Calu3 (cell line): ENCODE measurements at regions of chr6 and their contacts with region 1.

Region 1: GRCh38 chr6:138765896-138766655 is 7.5 kb upstream of the CCDC28A start:
- DNase-seq: no peak
- H3K4me3 Mint-ChIP-seq: no peak overlapping the region
- H3K27ac Mint-ChIP-seq: no peak overlapping the region
- H3K4me1 Mint-ChIP-seq: no peaks in the 10 kb centered on the region
- H3K27me3 Mint-ChIP-seq: no peaks in the 10 kb centered on the region
- CTCF ChIP-seq: no peak

Region 2: GRCh38 chr6:138520463-138520862 is 245.6 kb before region 1 on chr6:
- CTCF ChIA-PET with region 1: no interaction called
- intact Hi-C with region 1: loop called (anchors 10 kb)
- DNase-seq: no peak
- H3K4me3 Mint-ChIP-seq: no peak overlapping the region
- H3K27ac Mint-ChIP-seq: no peak overlapping the region
- H3K4me1 Mint-ChIP-seq: no peaks in the 10 kb centered on the region
- H3K27me3 Mint-ChIP-seq: no peaks in the 10 kb centered on the region
- CTCF ChIP-seq: no peak

Region 3: DNA sequence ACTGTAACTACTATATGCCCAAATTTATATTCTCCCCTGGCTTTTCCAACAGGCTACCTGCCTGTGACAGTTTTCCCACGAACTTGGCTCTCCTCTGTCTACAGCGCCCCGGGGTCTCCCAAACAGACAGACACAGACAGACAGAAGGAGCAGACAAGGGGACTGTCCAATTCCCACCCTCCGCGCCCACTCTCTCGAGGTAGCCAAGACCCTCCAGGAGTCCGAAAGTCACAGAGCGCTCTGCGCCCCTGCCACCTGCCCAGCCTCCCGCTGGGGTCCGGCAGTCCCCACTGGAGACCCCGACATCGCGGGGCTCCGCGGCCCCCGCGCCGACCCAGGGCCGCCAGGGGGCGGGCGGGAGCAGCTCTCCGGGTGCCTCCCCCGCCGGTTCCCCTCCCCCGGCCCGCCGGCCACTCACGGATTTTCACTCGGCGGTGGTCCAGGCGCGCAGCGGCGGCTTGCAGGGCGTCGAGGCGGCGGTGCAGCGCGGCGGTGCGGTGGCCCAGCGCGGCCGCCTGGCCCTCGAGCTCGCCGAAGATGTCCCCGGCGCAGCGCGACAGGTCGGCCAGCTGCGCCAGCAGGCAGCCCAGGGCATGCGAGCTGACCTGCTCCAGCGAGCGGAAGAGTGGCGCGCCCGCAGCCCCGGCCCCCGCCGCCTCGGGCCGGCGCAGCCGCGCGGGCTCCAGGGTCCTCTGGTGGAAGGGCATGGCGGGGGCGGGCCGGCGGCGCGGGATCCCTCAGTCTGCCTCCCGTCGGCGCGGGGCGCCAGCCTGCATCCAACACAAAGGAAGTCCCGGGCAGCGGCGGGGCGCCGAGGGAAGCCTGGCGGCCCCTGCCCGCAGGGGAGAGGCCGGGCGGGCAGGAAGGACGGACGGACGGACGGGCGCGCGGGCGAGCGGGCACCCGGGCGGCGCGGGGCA is 73.8 kb before region 1 on chr6:
- CTCF ChIA-PET with region 1: no interaction called
- intact Hi-C with region 1: loop called (anchors 5 kb)
- DNase-seq: peak; percentile 75
- H3K4me3 Mint-ChIP-seq: peak overlapping the region; percentile 96
- H3K27ac Mint-ChIP-seq: peak overlapping the region; percentile 89
- H3K4me1 Mint-ChIP-seq: no peaks in the 10 kb centered on the region
- H3K27me3 Mint-ChIP-seq: no peaks in the 10 kb centered on the region
- CTCF ChIP-seq: peak; percentile 88

Region 4: GRCh38 chr6:138805016-138805765 is 39.1 kb after region 1 on chr6:
- CTCF ChIA-PET with region 1: no interaction called
- intact Hi-C with region 1: no loop called
- DNase-seq: no peak
- H3K4me3 Mint-ChIP-seq: no peak overlapping the region
- H3K27ac Mint-ChIP-seq: no peak overlapping the region
- H3K4me1 Mint-ChIP-seq: no peaks in the 10 kb centered on the region
- H3K27me3 Mint-ChIP-seq: no peaks in the 10 kb centered on the region
- CTCF ChIP-seq: no peak

Region 5: DNA sequence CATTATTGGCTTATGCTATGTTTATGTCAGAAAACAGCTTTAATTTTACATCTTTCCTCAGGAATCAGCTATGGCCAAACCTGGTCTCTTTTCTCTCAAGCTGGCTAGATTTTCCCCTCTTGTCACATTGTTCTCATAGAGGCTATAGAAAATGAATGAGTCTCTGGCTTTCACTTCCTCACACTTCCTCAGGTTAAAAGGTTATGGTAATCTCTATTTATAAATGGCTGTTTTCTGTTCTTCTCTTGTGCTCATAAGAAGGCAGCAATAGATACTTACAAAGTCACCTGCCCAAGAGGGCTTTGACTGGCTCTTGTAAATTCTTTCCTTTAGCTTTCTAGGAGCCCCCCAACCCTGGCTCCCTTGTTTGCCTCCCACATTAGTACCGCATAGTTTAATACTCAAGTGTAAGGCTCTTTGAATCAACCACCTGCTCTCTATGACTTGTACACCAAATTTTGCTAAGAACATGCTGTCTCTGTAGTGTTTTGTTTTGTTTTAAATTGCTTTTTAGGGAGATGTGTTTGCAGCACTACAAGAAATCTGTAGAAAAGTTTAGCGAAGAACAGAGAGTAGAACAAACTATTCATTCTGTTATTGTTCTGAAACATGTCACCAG is 1505.8 kb after region 1 on chr6:
- CTCF ChIA-PET with region 1: no interaction called
- intact Hi-C with region 1: no loop called
- DNase-seq: no peak
- H3K4me3 Mint-ChIP-seq: no peak overlapping the region
- H3K27ac Mint-ChIP-seq: no peak overlapping the region
- H3K4me1 Mint-ChIP-seq: no peaks in the 10 kb centered on the region
- H3K27me3 Mint-ChIP-seq: no peaks in the 10 kb centered on the region
- CTCF ChIP-seq: no peak